ENCODE measurements at regions of chr4 and their contacts with region 1.

Region 1: DNA sequence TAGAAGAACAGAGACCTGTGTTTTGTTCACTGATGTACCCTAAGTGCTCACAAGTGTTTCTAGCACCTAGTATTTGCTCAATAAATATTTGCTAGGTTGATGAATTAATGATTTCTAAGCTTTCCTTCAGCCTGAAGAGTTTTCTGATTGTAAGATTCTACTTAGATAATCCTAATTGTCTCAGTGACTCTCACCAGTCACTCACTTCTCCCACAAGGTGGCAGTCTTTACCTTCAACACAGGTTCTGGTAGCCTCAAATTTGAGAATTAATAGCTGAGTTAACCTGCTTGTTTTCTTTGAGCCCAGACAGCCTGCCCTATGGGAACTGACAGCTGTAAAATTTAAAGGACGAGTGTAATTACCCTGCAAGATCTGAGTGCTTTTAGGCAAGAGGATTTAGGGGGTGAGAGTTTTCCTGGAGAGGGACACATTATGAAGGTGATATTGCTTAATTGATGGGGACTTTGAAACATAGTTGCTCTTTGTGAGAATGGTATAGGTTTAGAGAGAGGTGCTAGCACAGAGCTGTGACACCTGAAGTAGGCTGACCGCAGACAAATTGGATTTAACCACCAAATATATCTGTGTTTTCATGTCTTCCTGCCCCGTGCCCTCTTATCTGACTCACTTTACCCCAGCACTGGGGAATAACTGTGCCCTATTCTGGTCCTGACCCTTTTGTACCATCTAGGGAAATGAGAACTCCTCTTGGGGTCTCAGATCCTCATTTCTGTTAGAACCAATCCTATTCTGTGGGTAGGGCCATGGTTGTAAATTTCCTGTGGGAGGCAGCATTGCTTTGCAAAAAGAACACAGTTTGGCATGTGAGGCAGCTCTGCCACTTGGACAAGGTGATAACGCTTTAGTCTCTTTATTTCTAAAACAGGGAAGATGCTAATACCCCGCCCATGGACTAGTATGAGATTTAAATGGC is 27.7 kb downstream of the CD38 start:
- DNase-seq: peak; percentile 43
- H3K27ac ChIP-seq: no peak overlapping the region
- CTCF ChIP-seq: peak; percentile 82

Region 2: GRCh38 chr4:14452764-14453163 is 1353.1 kb before region 1 on chr4:
- CTCF ChIA-PET with region 1: no interaction called
- POLR2A ChIA-PET with region 1: no interaction called
- DNase-seq: no peak
- H3K27ac ChIP-seq: no peak overlapping the region
- CTCF ChIP-seq: no peak

Region 3: DNA sequence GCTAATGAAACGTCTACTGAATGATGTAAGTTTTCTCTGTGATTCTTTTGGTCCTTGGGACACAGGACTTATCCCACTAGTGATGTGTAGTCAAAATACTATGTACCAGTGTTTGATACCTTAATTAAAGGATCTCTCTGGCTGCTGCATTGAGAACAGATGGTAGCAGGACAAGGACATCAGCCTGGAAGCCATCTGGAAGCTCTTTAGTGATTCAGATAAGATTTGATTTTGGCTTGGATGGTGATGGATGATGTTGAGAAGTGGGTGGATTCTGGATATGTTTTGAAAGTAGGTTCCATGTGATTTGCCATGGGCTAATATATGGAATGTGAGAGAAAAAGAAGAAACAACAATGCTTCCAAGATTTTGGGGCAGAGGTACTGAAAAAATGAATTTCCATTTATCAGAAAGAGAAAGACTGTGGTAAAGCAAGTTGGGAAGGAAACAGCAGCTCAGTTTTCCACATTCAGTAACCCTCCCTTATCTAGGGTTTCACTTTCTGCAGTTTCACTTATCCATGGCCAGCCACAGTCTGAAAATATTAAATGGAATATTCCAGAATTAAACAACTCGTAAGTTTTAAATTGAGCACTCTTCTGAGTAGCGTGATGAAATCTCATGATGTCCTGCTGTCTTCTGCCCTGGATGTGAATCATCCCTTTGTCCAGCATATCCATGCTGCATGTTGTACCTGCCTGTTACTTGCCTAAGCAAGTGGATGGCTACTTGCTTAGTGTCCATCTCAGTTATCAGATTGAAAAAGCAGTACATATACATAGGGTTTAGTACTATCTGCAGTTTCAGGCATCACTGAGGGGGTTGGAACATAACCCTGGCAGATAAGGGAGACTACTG is 12.1 kb before region 1 on chr4:
- CTCF ChIA-PET with region 1: no interaction called
- POLR2A ChIA-PET with region 1: no interaction called
- DNase-seq: no peak
- H3K27ac ChIP-seq: no peak overlapping the region
- CTCF ChIP-seq: no peak

Region 4: GRCh38 chr4:15882675-15883086 is 76.8 kb after region 1 on chr4:
- CTCF ChIA-PET with region 1: interaction called, 20 read pairs
- POLR2A ChIA-PET with region 1: no interaction called
- DNase-seq: peak; percentile 34
- H3K27ac ChIP-seq: no peak overlapping the region
- CTCF ChIP-seq: peak; percentile 88

Region 5: DNA sequence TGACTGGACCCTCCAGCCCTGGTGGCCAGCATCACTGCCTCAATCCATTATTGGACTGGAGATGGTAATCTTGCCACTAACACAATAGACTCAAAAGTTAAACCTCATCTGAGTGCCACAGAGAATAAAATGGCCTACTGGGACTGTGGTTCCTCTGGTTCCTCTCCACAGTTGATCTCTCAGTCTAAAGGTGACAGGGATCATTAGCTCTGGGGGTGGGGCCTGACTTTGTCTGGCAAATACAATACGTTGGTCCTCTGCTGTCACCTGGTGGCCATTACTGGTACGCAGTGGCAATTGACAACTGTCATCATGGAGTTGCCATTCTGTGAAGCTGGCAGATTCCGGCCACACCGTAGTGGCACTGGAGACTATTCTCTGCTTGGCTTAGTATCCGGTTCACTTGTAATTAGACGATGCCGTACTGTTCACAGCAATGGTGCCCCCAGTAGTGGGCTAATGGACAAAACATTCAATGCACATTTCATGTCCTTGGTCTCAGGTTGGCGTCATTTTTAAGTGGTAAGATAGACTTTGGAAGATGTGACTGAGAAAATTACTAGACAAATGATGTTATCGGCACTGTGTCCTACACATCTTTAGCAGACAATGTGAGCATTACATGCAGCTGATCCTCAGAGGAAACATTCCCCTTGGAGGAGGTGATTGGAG is 150.5 kb after region 1 on chr4:
- CTCF ChIA-PET with region 1: interaction called, 18 read pairs
- POLR2A ChIA-PET with region 1: no interaction called
- DNase-seq: peak; percentile 69
- H3K27ac ChIP-seq: peak overlapping the region; percentile 8; the same call in 1 of the 2 replicates
- CTCF ChIP-seq: peak; percentile 96

Region 6: DNA sequence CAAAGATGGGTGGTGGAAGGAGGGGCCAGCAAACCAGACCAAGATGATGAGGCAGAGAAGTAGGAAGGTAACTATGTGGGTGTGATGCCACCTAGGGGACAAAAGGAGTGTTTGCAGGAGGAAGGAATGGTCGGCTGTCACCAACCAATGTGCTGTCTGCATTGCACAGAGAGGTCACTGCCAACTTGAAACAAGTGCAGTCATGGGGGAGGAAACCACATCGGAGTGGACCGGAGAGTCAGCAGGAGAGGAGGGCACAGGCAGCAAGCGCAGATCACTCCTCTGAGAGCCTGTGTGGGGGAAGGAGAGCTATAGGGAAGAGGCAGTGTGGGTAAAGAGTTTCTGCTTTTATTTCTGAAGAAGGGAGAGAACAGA is 195.6 kb after region 1 on chr4:
- CTCF ChIA-PET with region 1: interaction called, 20 read pairs
- POLR2A ChIA-PET with region 1: interaction called, 3 read pairs
- DNase-seq: peak; percentile 59
- H3K27ac ChIP-seq: no peak overlapping the region
- CTCF ChIP-seq: peak; percentile 86

Region 7: GRCh38 chr4:16384576-16384975 is 578.7 kb after region 1 on chr4:
- CTCF ChIA-PET with region 1: no interaction called
- POLR2A ChIA-PET with region 1: no interaction called
- DNase-seq: no peak
- H3K27ac ChIP-seq: no peak overlapping the region
- CTCF ChIP-seq: no peak

Measured in RWPE1 (cell line).